ENCODE measurements at regions of chr6 and their contacts with region 1.

Region 1: DNA sequence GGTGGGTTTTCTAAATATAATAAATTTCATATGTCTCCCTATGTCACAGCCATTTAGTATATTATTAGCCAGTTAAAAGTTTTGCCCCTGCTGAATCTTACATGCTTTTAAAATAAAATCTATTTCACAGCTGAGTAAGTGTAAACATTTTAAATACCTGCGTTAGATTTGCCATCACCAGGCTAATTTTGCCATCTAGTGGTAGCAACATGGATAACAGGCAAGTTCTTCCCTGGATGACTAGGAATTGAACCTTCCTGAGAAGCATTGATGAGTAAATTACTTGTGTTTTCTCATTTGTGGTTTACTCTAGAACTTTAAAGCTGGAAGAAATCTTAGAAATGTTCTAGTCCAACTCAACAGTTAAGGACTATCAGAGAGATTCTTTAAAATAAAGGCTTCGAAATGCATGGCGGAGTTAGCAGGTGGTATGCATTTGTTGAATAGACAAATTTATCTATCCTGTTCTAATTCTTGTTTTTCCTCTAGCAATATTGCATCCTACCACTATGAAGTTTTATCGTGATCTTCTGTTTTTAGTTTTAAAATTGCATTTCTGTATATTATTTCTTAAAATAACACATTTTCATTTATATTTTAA is 2.6 kb downstream of the PRSS35 start:
- DNase-seq: peak; percentile 48
- CTCF ChIP-seq: peak; percentile 79

Region 2: GRCh38 chr6:81787313-81788068 is 1727.5 kb before region 1 on chr6:
- CTCF ChIA-PET with region 1: no interaction called
- POLR2A ChIA-PET with region 1: no interaction called
- DNase-seq: no peak
- CTCF ChIP-seq: no peak

Region 3: DNA sequence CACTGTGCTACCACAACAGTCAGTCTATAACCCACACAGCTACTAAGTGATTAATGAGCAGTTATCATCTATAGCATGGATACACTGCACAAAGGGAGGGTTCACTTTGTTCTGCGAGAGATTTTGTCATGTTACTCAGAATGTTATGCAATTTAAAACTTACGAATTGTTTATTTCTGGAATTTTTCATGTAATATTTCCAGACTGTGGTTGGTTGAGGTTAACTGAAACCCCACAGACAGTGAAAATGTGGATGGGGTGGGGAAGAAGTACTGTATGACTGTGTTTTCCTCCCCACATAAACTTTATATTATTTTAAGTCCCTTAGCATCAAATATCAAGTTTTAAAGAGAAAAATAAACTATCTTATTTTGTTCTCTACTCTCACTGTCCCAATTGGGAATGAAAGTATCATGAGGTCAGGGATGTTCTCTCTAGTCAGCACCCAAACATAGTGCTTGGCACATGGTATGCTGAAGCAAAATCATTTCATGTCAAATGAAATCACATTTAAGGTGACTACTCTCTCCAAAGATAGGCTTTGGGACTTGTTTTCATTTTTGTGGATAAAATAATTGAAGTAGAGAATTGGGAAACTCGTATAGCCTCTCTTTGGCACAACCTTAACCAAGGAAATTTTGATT is 422.1 kb before region 1 on chr6:
- CTCF ChIA-PET with region 1: no interaction called
- POLR2A ChIA-PET with region 1: no interaction called
- DNase-seq: no peak
- CTCF ChIP-seq: no peak

Region 4: DNA sequence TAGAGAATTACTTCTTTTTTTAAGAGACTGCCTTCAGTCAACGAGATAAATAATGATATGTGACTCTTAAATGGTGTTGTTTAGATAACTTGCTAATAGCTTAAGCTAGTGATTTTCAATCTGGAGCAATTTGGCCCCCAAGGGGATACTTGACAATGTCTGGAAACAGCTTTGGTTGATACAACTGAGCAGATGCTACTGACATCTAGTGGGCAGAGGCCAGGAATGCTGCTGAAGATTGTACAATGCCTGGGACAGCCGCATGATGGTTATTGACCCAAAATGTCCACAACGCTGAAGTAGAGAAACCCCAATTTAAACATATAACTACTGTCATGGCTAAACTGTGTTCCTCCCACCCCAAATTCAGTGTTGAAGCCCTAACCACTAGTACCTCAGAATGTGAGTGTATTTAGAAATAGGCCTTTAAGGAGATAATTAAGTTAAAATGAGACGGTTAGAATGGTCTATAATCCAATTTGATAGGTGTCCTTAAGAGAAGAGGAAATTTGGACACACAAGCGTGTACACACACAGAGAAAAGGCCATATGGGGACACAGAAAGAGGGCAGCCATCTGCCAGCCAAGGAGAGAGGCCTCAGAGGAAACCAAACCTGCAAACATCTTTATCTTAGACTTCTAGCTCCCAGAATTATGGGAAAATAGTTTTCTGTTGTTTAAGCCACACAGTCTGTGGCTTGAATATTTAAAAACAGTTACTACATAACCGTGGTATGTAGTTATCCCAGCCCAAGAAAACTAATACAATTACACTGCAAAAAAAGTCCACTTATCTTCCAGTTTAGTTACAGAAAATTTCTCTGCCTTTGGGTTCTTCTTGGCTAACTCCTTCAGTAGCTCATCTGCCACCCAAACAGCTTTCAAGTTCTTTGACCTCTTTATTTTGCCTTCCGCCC is 299.6 kb before region 1 on chr6:
- CTCF ChIA-PET with region 1: interaction called, 235 read pairs
- POLR2A ChIA-PET with region 1: no interaction called
- DNase-seq: peak; percentile 43
- CTCF ChIP-seq: peak; percentile 88

Region 5: GRCh38 chr6:83221889-83222479 is 293.0 kb before region 1 on chr6:
- CTCF ChIA-PET with region 1: interaction called, 235 read pairs
- POLR2A ChIA-PET with region 1: no interaction called
- DNase-seq: peak; percentile 24
- CTCF ChIP-seq: peak; percentile 27

Region 6: GRCh38 chr6:83417880-83418663 is 96.9 kb before region 1 on chr6:
- CTCF ChIA-PET with region 1: interaction called, 57 read pairs
- POLR2A ChIA-PET with region 1: no interaction called
- DNase-seq: peak; percentile 21
- CTCF ChIP-seq: peak; percentile 39

Region 7: GRCh38 chr6:83488448-83488847 is 26.5 kb before region 1 on chr6:
- CTCF ChIA-PET with region 1: no interaction called
- POLR2A ChIA-PET with region 1: no interaction called
- DNase-seq: no peak
- CTCF ChIP-seq: no peak

Region 8: GRCh38 chr6:83536034-83536646 is 21.2 kb after region 1 on chr6:
- CTCF ChIA-PET with region 1: interaction called, 12 read pairs
- POLR2A ChIA-PET with region 1: no interaction called
- DNase-seq: peak; percentile 34
- CTCF ChIP-seq: peak; percentile 75

Region 9: DNA sequence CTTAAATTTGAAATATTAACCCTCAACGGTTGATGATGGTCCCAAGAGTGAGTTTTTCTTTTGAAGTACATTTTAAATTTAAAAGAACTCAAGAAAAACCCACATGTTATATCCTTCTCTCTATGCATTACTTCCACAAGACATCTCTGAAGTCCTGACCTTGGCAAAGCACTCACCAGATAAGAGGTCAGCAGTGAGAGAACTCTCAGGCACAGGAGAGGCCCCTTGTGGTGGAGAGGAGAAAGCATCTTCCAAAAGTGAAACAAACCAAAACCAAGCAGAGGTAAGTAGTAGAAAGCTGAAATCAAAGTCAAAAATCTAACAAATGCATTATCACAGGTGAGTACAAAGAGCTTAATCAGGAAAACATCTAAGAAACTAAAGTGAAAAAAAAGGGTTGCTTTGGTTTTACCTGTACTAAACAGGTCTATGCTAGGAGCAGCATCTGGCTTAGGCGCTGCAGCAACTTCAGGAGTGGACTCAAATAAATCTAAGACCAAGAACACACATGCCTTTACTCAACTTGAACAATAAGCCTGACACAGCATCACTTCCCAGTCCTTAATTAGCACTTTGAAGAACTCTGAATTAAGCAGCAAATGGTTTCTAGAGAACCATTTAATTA is 77.9 kb after region 1 on chr6:
- CTCF ChIA-PET with region 1: no interaction called
- POLR2A ChIA-PET with region 1: no interaction called
- DNase-seq: peak; percentile 36
- CTCF ChIP-seq: peak; percentile 69